GM10248 (cell line): ENCODE measurements at regions of chr12 and their contacts with region 1.

Region 1: DNA sequence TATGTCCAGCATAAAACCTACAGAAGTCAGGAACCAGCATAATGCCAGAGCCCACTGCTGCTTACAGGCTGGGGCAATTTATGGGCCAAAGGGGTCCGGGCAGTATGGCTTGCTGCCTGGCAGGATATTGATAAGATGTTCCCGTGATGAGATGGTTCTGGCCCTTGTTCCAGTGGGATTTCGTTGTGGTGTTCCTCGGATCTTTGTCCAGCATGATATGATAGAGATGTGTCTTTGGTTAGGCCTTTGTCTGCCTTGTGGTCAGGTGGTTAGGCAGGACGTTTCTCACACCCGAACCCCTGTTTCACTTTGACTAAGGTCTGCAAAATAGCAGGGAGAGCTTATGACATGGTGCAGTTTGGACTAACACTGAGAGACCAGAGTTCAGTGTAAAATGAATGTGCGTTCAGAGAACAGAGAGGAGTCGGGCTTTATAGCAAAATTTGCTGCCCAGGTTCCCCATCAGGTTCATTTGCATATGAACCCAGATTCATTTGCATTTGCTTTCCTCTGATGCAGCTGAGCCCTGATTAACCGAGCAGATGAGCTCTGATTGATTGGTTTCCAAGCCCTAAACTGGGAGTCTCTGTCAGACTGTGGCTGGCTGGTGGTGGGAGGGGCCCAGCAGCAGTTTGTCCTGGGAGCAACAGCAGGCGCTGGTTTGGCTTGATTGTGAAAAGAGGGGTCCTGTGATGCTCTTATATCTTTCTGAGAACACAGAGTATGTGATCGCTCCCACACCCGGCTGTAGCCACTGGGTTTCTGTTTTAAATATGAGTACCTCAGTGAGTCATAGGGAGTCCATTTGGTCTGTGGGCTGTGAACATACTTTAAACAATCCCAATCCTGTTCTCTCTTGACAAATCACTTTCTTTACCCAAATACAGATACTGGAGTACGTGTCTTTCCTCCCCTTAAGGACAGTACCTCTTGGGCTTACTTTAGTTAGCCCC is 156.3 kb upstream of the PZP start:
- DNase-seq: peak; percentile 56
- CTCF ChIP-seq: no peak

Region 2: DNA sequence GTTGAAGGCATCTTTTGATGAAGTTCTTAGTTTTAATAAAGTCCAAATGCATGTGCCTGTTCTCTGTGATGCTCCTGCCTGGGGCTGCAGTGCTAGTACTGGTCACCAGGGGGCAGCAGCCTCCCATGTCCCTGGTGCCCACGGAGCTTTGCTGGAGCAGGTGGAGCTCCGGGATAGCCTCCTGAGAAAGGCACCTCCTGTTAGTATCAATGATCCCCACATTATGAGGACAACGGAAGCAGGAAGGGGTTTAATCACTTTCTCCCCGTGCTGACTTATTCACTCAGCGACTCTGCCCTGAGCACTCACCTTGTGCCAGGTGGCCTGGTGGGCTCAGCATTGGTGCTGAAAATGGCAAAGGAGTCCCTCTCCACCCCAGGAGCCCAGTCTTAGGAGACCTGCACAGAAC is 33.3 kb before region 1 on chr12:
- CTCF ChIA-PET with region 1: interaction called, 558 read pairs
- POLR2A ChIA-PET with region 1: no interaction called
- DNase-seq: peak; percentile 67
- CTCF ChIP-seq: peak; percentile 96

Region 3: DNA sequence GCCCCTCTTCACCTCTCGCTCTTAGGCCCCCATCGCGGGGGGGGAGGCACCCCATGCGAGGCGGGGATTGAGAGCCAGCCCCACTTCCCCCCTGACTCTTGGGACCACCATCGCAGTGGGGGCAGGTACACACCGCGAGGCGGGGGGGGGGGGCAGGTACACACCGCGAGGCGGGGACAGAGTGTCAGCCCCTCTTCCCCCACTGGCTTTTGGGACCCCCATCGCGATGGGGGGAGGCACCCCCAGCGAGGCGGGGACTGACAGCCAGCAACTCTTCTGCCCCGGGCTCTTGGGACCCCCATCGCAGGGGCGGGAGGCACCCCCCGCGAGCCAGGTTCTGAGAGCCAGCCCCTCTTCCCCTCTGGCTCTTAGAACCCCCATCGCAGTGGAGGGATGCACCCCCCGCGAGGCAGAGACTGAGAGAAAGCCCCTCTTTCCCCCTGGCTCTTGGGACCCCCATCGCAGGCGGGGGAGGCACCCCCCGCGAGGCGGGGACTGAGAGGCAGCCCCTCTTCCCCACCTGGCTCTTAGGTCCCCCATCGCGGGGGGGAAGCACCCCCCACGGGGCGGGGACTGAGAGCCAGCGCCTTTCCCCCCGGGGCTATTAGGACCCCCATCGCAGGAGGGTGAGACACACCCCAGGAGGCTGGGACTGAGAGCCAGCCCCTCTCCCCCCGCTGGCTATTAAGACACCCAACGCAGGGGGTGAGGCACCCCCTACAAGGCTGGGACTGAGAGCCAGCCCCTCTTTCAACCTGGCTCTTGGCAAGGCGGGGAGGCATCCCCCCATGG is 40.2 kb after region 1 on chr12:
- CTCF ChIA-PET with region 1: no interaction called
- POLR2A ChIA-PET with region 1: no interaction called
- DNase-seq: peak; percentile 16
- CTCF ChIP-seq: no peak